Heart right ventricle (tissue), 16 donors: ENCODE measurements at regions of chr14 and their contacts with region 1.

Region 1: DNA sequence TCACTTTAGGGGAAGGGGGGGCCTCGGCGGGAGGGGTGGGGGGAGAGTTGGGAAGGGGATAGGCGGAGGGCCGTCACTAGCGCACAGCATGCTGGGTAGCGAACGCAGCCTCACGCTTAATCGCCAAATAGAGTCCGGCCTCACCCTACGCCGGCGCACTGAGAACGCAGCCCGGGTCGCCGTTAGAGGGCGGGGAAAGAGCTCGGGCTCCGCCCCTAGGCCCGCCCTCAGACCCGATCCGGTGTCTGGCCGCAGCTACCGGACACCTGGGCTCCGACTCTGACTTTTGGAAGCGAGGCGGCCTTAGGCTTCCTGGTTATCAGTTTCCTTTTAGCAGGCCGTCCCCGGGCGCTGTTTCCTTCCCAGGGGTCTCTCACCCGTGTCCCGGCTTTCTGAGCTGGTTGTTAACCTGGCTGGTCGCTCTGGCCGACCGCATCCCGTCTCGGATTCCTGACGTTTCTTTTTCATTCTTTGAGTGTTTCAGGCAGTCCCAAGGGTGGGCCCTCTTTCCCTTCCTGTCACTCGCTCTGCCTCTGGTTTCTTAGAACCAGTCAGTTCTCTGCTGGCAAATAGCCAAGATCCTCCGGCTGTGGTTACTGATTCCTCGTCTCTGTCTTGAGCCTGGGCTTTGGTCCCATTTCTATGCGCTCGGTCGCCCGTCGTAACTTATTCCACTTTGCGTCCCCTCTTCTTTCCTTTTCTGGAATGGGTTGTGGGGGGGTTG is 378 bp upstream of the STRN3 start:
- DNase-seq: peak; percentile 96
- ATAC-seq: peak; percentile 97 to 99 (median 99)
- H3K4me3 ChIP-seq: peak overlapping the region; percentile 68 to 99 (median 96)
- H3K27ac ChIP-seq: peak overlapping the region; percentile 97 to 100 (median 98)
- H3K4me1 ChIP-seq: peaks cover 0 to 34% (median 28%) of the 10 kb centered on the region in 9 donors
- H3K27me3 ChIP-seq: no peaks in the 10 kb centered on the region
- CTCF ChIP-seq: peak in 3 of 9 donors; percentile 10 to 19 (median 15)

Region 2: DNA sequence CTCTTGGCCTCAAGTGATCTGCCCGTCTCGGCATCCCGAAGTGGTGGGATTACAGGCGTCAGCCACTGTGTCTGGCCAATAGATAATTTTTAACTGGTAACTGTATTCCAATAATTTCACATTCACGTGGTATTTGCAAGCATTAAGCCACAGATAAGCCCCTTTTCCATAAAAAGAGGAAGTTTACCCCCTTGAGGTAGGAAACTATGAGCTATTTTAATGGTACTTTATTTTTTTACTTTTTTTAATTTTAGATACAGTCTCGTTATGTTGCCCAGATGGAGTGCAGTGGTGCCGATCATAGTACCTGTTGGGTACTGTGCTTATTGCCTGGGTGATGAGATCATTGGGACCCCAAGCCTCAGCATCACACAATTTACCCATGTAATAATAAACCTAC is 44.0 kb before region 1 on chr14:
- intact Hi-C with region 1: loop called in 1 of 10 experiments (anchors 5 kb)
- DNase-seq: no peak
- ATAC-seq: no peak
- H3K4me3 ChIP-seq: no peak overlapping the region
- H3K27ac ChIP-seq: no peak overlapping the region
- H3K4me1 ChIP-seq: peaks cover 0 to 12% (median 4%) of the 10 kb centered on the region in 9 donors
- H3K27me3 ChIP-seq: no peaks in the 10 kb centered on the region
- CTCF ChIP-seq: no peak

Region 3: GRCh38 chr14:30994681-30995620 is 31.6 kb before region 1 on chr14:
- intact Hi-C with region 1: loop called in 2 of 10 experiments (anchors 5 kb)
- DNase-seq: no peak
- ATAC-seq: peak in 7 of 8 donors; percentile 34 to 68 (median 53)
- H3K4me3 ChIP-seq: no peak overlapping the region
- H3K27ac ChIP-seq: peak overlapping the region in 7 of 10 donors; percentile 2 to 63 (median 54)
- H3K4me1 ChIP-seq: peaks cover 0 to 67% (median 43%) of the 10 kb centered on the region in 9 donors
- H3K27me3 ChIP-seq: no peaks in the 10 kb centered on the region
- CTCF ChIP-seq: no peak

Region 4: DNA sequence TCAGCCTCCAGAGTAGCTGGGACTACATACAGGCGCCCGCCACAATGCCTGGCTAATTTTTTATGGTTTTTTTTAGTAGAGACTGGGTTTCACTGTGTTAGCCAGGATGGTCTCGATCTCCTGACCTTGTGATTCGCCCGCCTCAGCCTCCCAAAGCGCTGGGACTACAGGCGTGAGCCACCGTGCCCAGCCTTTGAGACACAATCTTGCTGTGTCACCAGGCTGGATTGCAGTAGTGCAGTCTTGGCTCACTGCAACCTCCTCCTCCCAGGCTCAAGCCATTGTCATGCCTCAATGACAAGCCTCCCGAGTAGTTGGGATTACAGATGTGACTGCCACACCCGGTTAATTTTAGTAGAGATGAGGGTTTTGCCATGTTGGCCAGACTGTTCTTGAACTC is 20.9 kb after region 1 on chr14:
- intact Hi-C with region 1: loop called in 1 of 10 experiments (anchors 2 kb)
- DNase-seq: no peak
- ATAC-seq: no peak
- H3K4me3 ChIP-seq: no peak overlapping the region
- H3K27ac ChIP-seq: peak overlapping the region in 1 of 10 donors; percentile 29
- H3K4me1 ChIP-seq: peaks cover 0 to 12% (median 0%) of the 10 kb centered on the region in 9 donors
- H3K27me3 ChIP-seq: no peaks in the 10 kb centered on the region
- CTCF ChIP-seq: no peak

Region 5: DNA sequence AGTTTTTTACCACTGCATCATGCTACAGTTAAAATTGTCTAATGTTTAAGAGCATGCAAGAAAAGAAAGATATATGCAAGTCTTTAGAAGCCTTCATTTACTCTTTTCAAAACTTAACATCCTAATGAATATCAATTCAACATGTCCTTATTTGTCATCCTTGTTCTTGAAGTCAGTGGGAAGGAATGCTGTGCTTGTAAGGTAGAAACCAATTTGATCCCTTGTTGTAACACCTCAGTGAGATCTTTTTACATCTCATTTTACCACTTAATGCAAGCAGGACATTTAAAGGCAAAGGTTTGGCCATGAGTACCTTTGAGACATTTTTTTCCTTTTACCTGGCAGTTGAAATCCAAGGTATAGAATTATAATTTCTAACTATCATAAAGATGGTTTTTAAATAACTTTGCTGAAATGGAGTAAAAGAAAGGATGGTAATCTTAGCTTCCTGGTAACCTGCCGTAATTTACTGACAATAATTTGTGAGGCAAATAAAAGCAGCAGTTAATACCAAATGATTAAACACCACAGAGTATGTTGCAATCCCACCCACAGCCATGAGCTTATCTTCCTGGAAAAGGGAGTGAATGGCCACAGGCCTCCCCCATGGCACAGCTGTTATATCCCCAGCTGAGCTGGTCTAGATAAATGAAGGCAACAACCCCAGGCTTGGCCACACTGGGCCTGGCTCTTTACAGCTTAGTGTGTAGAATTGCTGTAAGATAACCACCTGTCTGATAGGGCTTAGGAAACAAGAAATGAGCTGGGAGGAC is 32.8 kb after region 1 on chr14:
- intact Hi-C with region 1: no loop called
- DNase-seq: peak; percentile 29 to 32
- ATAC-seq: peak in 7 of 8 donors; percentile 27 to 93 (median 72)
- H3K4me3 ChIP-seq: no peak overlapping the region
- H3K27ac ChIP-seq: no peak overlapping the region
- H3K4me1 ChIP-seq: peaks cover 0 to 22% (median 0%) of the 10 kb centered on the region in 9 donors
- H3K27me3 ChIP-seq: no peaks in the 10 kb centered on the region
- CTCF ChIP-seq: no peak

Region 6: GRCh38 chr14:31084385-31084784 is 57.8 kb after region 1 on chr14:
- intact Hi-C with region 1: loop called in 1 of 10 experiments (anchors 10 kb)
- DNase-seq: no peak
- ATAC-seq: no peak
- H3K4me3 ChIP-seq: no peak overlapping the region
- H3K27ac ChIP-seq: no peak overlapping the region
- H3K4me1 ChIP-seq: peaks cover 0 to 7% (median under 1%) of the 10 kb centered on the region in 9 donors
- H3K27me3 ChIP-seq: no peaks in the 10 kb centered on the region
- CTCF ChIP-seq: no peak

Region 7: DNA sequence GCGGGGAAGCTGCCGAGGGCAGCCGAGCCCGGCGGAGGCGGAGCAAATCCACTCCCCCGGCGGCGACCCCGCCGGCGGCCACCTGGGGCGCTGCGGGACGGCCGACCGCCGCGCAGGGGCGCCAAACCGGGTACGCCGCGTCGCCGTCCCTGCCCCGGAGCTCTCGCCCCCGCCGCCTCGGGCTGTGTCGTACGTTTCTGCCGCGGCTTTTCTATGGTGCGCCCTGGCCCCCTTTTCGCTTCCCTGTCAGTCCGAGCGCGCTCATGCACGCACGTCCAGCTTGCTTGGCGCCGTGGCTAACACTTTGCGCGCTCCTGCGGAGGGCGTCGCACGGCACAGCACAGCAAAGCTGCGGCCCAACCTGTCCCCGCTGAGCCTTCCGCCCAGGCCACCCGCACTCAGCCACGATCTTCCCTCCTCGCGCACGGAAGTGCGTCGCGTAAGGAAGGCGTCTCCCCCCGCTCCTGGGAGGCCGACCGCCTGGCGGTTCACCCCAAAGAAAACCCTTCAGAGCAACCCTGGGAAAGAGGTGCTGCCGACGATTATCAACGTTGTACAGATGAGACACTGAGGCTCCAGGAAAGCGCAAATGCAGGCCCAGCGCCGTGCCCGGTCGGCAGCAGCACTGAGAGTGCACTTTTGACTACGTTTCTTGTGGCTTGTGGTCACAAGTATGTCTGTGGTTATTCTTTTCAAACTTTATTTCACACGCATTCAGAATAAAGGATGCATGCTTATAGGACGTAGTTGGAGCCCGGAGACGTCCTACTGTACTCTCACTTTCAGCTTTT is 181.4 kb after region 1 on chr14 and contains the start of gene HECTD1:
- intact Hi-C with region 1: loop called in 1 of 10 experiments (anchors 10 kb)
- DNase-seq: peak; percentile 79 to 90
- ATAC-seq: peak; percentile 92 to 97 (median 94)
- H3K4me3 ChIP-seq: peak within 1 kb of the TSS; percentile 68 to 99 (median 92)
- H3K27ac ChIP-seq: peak within 1 kb of the TSS; percentile 93 to 100 (median 99)
- H3K4me1 ChIP-seq: peaks cover 4 to 34% (median 29%) of the 10 kb centered on the region in 9 donors
- H3K27me3 ChIP-seq: no peaks in the 10 kb centered on the region
- CTCF ChIP-seq: peak; percentile 61 to 97 (median 86)
- total RNA-seq, gene HECTD1: 126 to 189 (median 159) TPM